ENCODE measurements at regions of chr15 and their contacts with region 1.

Region 1: GRCh38 chr15:45457641-45458433 is 64.7 kb downstream of the SLC30A4 start:
- DNase-seq: peak in 1 of 2 experiments; percentile 84
- H3K4me3 ChIP-seq: peak overlapping the region in 1 of 4 experiments; percentile 41; a peak in 3 of 8 replicates
- H3K27ac ChIP-seq: no peak overlapping the region
- H3K4me1 ChIP-seq: no peaks in the 10 kb centered on the region
- H3K27me3 ChIP-seq: peaks cover 7 to 15% (median 10%) of the 10 kb centered on the region in 4 experiments
- CTCF ChIP-seq: peak; percentile 21 to 91 (median 61)
- EP300 ChIP-seq: no peak
- POLR2A ChIP-seq: no peak
- RAD21 ChIP-seq: peak; percentile 93

Region 2: DNA sequence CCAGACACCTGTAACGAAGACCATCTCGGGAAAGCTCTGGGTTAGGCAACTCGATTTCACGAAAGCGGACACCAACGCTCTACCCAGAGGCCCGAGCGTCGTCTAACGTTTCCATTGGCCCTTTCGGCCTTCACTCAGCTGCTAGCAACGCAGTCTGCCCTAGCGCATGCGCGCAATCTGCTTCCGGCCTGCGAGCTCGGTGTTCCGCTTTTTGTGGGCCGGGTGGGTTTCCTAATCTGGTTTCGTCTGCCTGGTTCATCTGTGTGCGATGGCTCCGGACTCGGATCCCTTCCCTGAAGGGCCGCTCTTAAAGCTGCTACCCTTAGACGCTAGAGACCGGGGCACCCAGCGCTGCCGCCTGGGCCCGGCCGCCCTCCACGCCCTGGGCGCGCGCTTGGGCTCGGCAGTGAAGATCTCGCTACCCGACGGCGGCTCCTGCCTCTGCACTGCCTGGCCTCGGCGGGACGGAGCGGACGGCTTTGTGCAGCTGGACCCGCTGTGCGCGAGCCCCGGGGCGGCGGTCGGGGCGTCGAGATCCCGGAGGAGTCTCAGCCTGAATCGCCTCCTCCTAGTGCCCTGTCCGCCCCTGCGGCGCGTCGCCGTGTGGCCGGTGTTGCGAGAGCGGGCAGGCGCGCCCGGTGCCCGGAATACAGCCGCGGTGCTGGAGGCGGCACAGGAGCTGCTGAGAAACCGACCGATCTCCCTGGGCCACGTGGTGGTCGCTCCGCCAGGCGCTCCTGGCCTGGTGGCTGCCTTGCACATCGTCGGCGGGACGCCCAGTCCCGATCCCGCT is 55.5 kb before region 1 on chr15:
- CTCF ChIA-PET with region 1: interaction called, 10 read pairs
- POLR2A ChIA-PET with region 1: no interaction called
- DNase-seq: peak; percentile 93 to 94
- H3K4me3 ChIP-seq: peak overlapping the region; percentile 81 to 99 (median 85)
- H3K27ac ChIP-seq: peak overlapping the region; percentile 88
- H3K4me1 ChIP-seq: peaks cover 0 to 7% (median 0%) of the 10 kb centered on the region in 4 experiments; a peak in 2 of 7 replicates
- H3K27me3 ChIP-seq: no peaks in the 10 kb centered on the region
- CTCF ChIP-seq: no peak
- EP300 ChIP-seq: no peak
- POLR2A ChIP-seq: peak in 1 of 2 experiments; percentile 75; a peak in 2 of 3 replicates
- RAD21 ChIP-seq: no peak

Region 3: DNA sequence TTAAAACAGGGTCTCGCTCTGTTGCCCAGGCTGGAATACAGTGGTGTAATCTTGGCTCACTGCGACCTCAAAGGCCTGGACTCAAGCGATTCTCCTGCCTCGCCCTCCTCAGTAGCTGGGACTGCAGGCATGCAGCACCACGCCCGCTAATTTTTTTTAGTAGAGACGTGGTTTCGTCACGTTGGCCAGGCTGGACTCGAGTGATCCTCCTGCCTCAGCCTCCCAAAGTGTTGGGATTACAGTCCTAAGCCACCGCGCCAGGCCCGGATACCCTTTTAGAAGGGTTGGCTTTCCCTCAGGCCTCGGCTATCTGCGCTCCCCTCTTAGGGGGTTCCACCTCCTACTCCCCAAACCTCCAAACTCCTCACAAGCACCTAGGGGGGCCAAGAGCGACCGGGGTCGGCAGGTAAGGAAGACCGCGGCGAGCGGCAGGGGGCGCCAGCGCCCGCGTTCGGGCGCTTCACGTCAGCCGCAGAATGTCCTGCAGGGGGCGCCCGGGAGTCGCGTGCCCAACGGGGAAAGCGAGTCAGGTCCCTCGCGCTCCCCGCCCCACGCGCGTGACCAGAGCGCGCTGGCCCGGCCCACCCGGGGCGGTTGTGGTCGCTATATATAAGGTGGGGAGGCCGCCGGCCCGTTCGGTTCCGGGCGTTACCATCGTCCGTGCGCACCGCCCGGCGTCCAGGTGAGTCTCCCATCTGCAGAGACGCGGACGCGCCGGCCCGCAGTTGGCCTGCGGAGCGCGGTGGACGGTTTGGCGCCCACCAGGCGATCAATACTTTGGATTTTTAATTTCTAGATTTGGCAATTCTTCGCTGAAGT is 27.7 kb before region 1 on chr15:
- CTCF ChIA-PET with region 1: interaction called, 76 read pairs
- POLR2A ChIA-PET with region 1: no interaction called
- DNase-seq: peak; percentile 21 to 98
- H3K4me3 ChIP-seq: peak overlapping the region; percentile 21 to 63 (median 42)
- H3K27ac ChIP-seq: no peak overlapping the region
- H3K4me1 ChIP-seq: no peaks in the 10 kb centered on the region
- H3K27me3 ChIP-seq: peaks cover 3 to 22% (median 13%) of the 10 kb centered on the region in 4 experiments; a peak in 6 of 7 replicates
- CTCF ChIP-seq: peak; percentile 93 to 100 (median 93)
- EP300 ChIP-seq: no peak
- POLR2A ChIP-seq: no peak
- RAD21 ChIP-seq: peak; percentile 84 to 89

Region 4: DNA sequence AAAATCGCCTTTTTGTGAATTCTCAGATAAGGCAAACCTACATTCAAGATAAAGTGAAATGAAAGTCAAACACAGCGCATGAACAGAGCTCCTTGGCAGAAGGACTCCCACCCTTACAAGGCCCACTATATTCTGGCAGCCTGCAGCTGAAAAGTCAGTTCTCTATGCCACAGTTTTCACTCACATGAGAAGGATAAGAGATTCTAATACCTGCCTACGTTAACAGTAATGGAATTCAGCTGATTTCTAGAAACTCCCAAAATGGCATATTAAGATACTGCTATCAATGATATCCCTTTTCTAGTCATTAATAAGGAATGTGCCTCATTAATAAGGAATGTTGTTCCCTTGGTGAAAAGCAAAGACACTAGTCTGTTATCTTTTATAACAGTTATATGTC is 37.8 kb after region 1 on chr15:
- CTCF ChIA-PET with region 1: interaction called, 16 read pairs
- POLR2A ChIA-PET with region 1: no interaction called
- DNase-seq: no peak
- H3K4me3 ChIP-seq: no peak overlapping the region
- H3K27ac ChIP-seq: no peak overlapping the region
- H3K4me1 ChIP-seq: no peaks in the 10 kb centered on the region
- H3K27me3 ChIP-seq: no peaks in the 10 kb centered on the region
- CTCF ChIP-seq: no peak
- EP300 ChIP-seq: no peak
- POLR2A ChIP-seq: no peak
- RAD21 ChIP-seq: no peak

Region 5: DNA sequence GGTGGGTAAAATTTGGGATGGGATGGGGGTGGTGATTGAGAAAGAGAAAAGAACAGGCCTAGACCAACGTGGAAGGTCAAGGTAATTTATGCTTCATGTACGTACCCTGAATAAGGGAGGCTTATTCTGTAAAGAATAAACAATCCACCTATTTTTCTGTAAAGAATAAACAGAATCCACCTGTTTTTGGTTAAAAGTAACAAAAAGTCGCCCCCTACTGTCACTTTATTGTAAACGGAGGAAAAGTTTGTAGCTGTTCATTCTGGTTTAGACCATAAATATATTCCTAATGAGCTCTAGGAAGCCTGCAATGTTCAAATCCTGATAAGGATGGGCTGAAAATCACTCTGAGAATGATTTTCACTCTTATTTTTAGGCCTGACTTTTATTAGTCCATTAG is 153.5 kb after region 1 on chr15:
- CTCF ChIA-PET with region 1: interaction called, 19 read pairs
- POLR2A ChIA-PET with region 1: no interaction called
- DNase-seq: no peak
- H3K4me3 ChIP-seq: no peak overlapping the region
- H3K27ac ChIP-seq: no peak overlapping the region
- H3K4me1 ChIP-seq: no peaks in the 10 kb centered on the region
- H3K27me3 ChIP-seq: no peaks in the 10 kb centered on the region
- CTCF ChIP-seq: peak in 1 of 3 experiments; percentile 38; a peak in 2 of 4 replicates
- EP300 ChIP-seq: no peak
- POLR2A ChIP-seq: no peak
- RAD21 ChIP-seq: peak; percentile 29 to 34; a peak in 2 of 4 replicates

Region 6: DNA sequence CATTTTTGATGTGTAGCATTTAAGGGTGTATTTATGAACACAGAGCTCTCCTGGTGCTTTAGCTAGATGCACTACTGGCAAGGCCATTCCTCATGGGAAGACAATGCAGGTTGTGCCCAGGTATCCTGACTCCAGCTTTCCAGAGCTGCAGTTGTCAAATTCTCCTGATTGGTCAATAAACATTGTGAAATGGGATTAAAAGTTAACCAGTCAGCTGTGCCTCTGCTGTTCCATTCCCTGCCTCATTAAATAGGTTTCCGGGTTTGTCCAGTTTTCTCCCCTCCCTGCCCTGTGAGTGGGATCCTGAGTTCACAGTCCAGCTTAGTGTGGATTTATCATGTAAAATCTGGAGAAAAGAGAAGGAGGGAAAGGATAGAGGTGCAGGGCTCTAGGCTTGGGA is 384.3 kb after region 1 on chr15:
- CTCF ChIA-PET with region 1: no interaction called
- POLR2A ChIA-PET with region 1: no interaction called
- DNase-seq: no peak
- H3K4me3 ChIP-seq: no peak overlapping the region
- H3K27ac ChIP-seq: no peak overlapping the region
- H3K4me1 ChIP-seq: no peaks in the 10 kb centered on the region
- H3K27me3 ChIP-seq: no peaks in the 10 kb centered on the region
- CTCF ChIP-seq: no peak
- EP300 ChIP-seq: no peak
- POLR2A ChIP-seq: no peak
- RAD21 ChIP-seq: no peak

Measured in H1 (cell line).